Aorta (tissue), 5 donors: ENCODE measurements at regions of chr4 and their contacts with region 1.

Region 1: DNA sequence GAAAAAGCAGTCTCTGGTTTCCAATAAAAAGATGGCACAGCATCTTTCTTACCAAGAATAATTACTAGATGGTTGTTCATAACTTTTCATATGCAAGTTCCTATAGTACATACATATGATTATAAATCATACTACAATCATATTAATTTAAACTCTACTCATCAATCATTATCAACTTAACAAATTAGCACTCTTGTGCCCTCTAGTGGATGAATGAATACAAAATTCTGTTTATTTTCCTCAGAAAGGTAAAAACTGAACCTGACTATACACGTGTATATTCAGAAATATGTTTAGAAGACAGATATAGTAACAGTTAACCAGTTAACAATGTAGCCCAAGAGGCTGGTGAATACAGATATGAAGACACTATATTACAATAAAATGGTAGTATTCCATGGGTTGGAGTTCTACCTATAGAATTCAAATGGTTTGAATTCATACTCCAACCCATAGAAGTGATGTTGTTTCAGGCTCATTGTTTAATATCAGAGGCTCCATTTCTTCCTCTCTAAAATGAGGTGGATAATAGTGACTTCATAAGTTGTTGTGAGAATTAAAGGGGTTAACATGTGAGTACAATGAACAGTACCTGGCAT is 100.0 kb downstream of the ADAMTS3 start:
- DNase-seq: no peak
- ATAC-seq: no peak
- H3K4me3 ChIP-seq: no peak overlapping the region
- H3K27ac ChIP-seq: no peak overlapping the region
- H3K4me1 ChIP-seq: no peaks in the 10 kb centered on the region
- H3K27me3 ChIP-seq: no peaks in the 10 kb centered on the region

Region 2: DNA sequence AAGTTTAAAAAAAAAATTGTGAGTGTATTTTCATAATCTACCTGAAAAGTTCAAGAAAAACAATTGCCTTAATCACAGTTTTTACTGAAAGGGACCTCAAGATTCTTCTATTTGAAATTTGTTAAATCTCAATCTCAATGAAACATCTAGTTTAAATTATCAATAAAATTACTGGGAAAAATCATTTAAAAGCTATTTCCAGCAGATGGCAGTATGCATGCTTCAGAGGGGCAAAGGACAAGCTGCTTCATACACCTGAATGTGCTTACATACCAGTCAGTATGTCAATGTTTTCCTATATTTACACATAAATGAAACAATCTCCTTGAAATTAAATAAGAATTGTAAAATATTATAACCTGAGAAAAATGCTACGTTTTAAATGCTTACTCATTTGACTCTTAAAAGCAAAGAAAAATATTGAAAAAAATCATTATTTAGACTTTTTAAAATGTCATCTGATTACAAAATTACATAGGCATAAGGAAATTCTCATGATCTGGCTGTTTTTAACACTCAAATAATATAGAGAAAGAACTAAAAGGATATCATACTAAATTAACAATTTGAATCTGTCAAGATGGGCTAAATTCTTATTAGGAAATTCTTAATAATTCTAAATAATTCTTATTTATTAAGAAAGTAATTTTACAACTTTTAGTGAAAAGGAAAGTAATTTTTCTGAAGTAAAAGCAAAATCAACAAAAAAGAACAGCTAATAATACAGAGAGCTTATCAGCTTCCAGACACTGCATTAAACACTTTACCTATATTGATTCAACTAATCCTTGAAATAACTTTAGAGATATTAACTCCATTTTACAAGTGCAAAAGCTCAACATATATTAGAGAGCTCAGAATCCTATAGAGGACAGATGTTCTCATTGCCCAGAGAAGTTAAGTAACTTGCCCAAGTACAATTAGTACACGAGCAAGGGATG is 142.0 kb before region 1 on chr4:
- intact Hi-C with region 1: loop called (anchors 2 to 5 kb)
- DNase-seq: no peak
- ATAC-seq: no peak
- H3K4me3 ChIP-seq: no peak overlapping the region
- H3K27ac ChIP-seq: no peak overlapping the region
- H3K4me1 ChIP-seq: no peaks in the 10 kb centered on the region
- H3K27me3 ChIP-seq: no peaks in the 10 kb centered on the region

Region 3: DNA sequence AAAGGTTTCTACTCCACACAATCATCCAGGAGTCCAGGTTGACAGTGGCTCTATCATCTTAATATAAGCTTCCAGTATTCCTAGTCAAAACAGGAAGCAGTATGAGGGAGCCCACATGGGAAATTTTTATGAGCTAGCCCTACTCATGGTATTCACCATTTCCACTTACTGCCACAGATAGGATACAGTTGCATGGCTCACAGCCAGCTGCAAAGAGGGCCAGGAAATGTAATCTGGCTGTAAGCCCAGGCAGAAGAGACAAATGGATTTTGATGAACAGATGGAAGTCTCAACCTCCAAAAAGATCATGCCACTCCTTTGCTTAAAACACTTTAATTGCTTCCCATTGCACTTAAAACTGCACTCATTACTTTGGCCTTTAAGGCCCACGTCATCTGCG is 50.5 kb before region 1 on chr4:
- intact Hi-C with region 1: no loop called
- DNase-seq: peak in 1 of 2 donors; percentile 44
- ATAC-seq: no peak
- H3K4me3 ChIP-seq: no peak overlapping the region
- H3K27ac ChIP-seq: no peak overlapping the region
- H3K4me1 ChIP-seq: no peaks in the 10 kb centered on the region
- H3K27me3 ChIP-seq: no peaks in the 10 kb centered on the region

Region 4: GRCh38 chr4:72525938-72526337 is 56.9 kb after region 1 on chr4:
- intact Hi-C with region 1: loop called in 1 of 2 experiments (anchors 5 kb)
- DNase-seq: peak; percentile 77 to 86
- ATAC-seq: peak; percentile 64
- H3K4me3 ChIP-seq: no peak overlapping the region
- H3K27ac ChIP-seq: no peak overlapping the region
- H3K4me1 ChIP-seq: peaks cover 0 to 3% of the 10 kb centered on the region in 2 donors
- H3K27me3 ChIP-seq: no peaks in the 10 kb centered on the region

Region 5: GRCh38 chr4:72875138-72875537 is 406.1 kb after region 1 on chr4:
- intact Hi-C with region 1: no loop called
- DNase-seq: no peak
- ATAC-seq: no peak
- H3K4me3 ChIP-seq: no peak overlapping the region
- H3K27ac ChIP-seq: no peak overlapping the region
- H3K4me1 ChIP-seq: peaks cover 0 to 3% of the 10 kb centered on the region in 2 donors
- H3K27me3 ChIP-seq: no peaks in the 10 kb centered on the region